Gastrocnemius medialis (tissue), 4 donors: ENCODE measurements at regions of chr14 and their contacts with region 1.

Region 1: GRCh38 chr14:55301437-55302121 is 30.4 kb downstream of the FBXO34 start:
- DNase-seq: peak; percentile 70 to 74
- ATAC-seq: peak; percentile 91 to 93
- H3K4me3 ChIP-seq: peak overlapping the region in 2 of 4 donors; percentile 14 to 17
- H3K27ac ChIP-seq: peak overlapping the region; percentile 85 to 93 (median 90)
- H3K4me1 ChIP-seq: peaks cover 74 to 77% of the 10 kb centered on the region in 2 donors
- H3K27me3 ChIP-seq: no peaks in the 10 kb centered on the region
- CTCF ChIP-seq: no peak
- POLR2A ChIP-seq: no peak

Region 2: DNA sequence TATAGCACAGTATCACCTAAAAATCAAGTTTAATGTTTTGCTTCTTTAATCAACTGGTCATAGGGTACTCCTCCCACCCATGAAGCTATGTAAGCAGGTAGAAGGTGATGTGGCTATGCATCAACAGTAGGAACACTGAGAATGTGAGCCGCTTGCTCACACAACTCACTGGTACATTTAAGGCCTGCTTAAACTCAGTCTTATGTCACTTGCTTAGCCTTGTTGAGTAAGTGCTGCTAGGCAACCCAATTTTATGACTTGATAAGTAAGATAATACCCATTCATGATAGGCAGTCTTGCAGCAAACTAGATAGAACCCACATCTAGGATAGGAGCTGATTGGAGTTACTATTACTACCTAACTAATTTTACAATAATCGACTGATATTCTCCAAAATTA is 1274.9 kb before region 1 on chr14:
- in situ Hi-C with region 1: no loop called
- intact Hi-C with region 1: no loop called
- DNase-seq: no peak
- ATAC-seq: no peak
- H3K4me3 ChIP-seq: no peak overlapping the region
- H3K27ac ChIP-seq: no peak overlapping the region
- H3K4me1 ChIP-seq: no peaks in the 10 kb centered on the region
- H3K27me3 ChIP-seq: no peaks in the 10 kb centered on the region
- CTCF ChIP-seq: no peak
- POLR2A ChIP-seq: no peak

Region 3: GRCh38 chr14:55285048-55285652 is 16.4 kb before region 1 on chr14:
- in situ Hi-C with region 1: no loop called
- intact Hi-C with region 1: loop called (anchors 2 kb)
- DNase-seq: peak; percentile 31 to 53
- ATAC-seq: peak; percentile 25 to 50
- H3K4me3 ChIP-seq: peak overlapping the region in 3 of 4 donors; percentile 14 to 24 (median 14)
- H3K27ac ChIP-seq: peak overlapping the region; percentile 58 to 82 (median 78)
- H3K4me1 ChIP-seq: peaks cover 51 to 68% of the 10 kb centered on the region in 2 donors
- H3K27me3 ChIP-seq: no peaks in the 10 kb centered on the region
- CTCF ChIP-seq: no peak
- POLR2A ChIP-seq: no peak